ENCODE measurements at regions of chr22 and their contacts with region 1.

Region 1: DNA sequence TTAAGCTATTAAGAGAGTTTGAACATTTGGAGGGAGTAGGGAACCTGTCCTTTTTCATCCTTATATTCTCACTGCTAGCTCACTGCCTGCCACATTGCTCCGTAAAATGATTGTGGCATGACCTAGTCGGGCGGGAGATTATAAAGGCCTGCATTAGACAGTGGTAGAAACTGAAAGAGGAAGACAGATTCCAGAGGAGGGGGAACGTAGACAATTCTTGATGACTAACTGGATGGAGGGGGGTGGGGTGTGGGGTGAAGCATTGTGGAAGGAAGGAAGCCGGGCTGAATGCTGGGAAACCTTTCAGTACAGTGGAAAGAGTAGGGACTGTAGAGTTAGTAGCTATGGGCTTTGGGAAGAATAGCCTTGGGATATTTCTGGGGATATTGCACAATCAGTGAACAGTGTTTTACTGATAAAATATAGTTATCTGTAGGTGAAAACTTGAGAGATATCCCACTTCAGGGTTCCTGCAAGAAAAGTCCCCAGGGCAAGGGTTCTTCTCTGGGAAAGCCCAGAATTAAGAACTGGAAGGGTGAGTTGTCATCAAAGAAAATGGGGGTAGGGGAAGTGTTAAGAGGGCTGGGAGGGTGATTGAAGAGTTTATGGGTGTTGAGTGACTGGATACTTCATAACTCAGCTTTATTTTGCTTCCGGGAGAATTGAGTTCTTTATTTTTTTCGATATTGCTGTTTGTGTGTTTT is 2.1 kb downstream of the MED15 start:
- DNase-seq: no peak
- ATAC-seq: peak; percentile 42
- H3K4me3 ChIP-seq: peak overlapping the region; percentile 95 to 97
- H3K27ac ChIP-seq: peak overlapping the region; percentile 80
- H3K4me1 ChIP-seq: peaks cover 24% of the 10 kb centered on the region
- H3K27me3 ChIP-seq: no peaks in the 10 kb centered on the region
- CTCF ChIP-seq: no peak

Region 2: DNA sequence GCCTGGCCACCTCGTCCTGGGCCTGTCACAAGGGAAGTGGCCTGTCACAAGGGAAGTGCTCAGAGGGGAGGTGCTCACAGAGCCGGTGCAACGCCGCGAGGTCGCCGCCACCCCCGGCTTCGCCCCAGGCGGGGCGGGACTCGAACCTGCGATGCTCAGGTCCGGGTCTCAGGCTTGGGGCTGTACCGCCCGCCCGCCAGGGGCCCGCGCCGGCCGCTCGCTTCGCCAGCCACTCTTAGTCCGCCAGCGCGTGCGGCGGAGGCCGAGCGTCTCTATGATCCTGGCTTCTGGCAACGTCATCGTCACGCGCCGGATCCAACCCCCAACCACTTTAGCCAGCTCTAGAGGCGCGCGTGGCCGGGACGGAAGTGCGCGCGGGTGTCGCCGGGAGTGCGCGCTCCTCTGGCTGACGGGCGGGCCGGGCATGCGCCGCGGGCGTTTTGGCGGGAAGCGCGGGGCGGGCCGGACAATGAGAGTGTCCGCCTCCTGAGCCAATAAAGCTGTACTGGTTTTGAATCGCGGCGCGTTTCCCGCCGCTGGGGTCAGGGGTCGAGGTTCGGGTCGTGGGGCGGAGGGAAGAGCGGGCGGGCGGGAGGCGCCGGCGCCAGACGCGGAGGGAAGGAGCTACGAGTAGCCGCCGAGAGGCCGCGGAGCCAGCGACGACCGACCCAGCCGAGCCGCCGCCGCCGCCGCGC is 392.4 kb before region 1 on chr22 and contains the start of gene TRMT2A:
- CTCF ChIA-PET with region 1: no interaction called
- POLR2A ChIA-PET with region 1: no interaction called
- in situ Hi-C with region 1: no loop called
- intact Hi-C with region 1: no loop called
- DNase-seq: peak; percentile 77
- ATAC-seq: peak; percentile 85
- H3K4me3 ChIP-seq: peak within 1 kb of the TSS; percentile 82 to 86
- H3K27ac ChIP-seq: peak within 1 kb of the TSS; percentile 94
- H3K4me1 ChIP-seq: peaks cover 19% of the 10 kb centered on the region
- H3K27me3 ChIP-seq: no peaks in the 10 kb centered on the region
- CTCF ChIP-seq: no peak
- total RNA-seq, gene TRMT2A: 66.7 TPM

Region 3: GRCh38 chr22:20523086-20523983 is 13.8 kb after region 1 on chr22:
- CTCF ChIA-PET with region 1: interaction called, 10 read pairs
- POLR2A ChIA-PET with region 1: no interaction called
- in situ Hi-C with region 1: no loop called
- intact Hi-C with region 1: no loop called
- DNase-seq: no peak
- ATAC-seq: 0 out of 2 replicates have a peak, but pooled peaks have one; percentile 27
- H3K4me3 ChIP-seq: no peak overlapping the region
- H3K27ac ChIP-seq: peak overlapping the region; percentile 51; the same call in 1 of the 2 replicates
- H3K4me1 ChIP-seq: peaks cover 15% of the 10 kb centered on the region
- H3K27me3 ChIP-seq: no peaks in the 10 kb centered on the region
- CTCF ChIP-seq: no peak